ENCODE measurements at regions of chr9 and their contacts with region 1.

Region 1: GRCh38 chr9:4923580-4924544 is 61.2 kb upstream of the JAK2 start:
- DNase-seq: peak; percentile 32 to 36
- ATAC-seq: peak; percentile 56 to 78; a peak in 3 of 6 replicates
- H3K4me3 ChIP-seq: no peak overlapping the region
- H3K27ac ChIP-seq: peak overlapping the region in 1 of 2 experiments; percentile 16; a peak in 1 of 6 replicates
- H3K4me1 ChIP-seq: no peaks in the 10 kb centered on the region
- CTCF ChIP-seq: peak; percentile 63
- EP300 ChIP-seq: no peak
- POLR2A ChIP-seq: no peak
- RAD21 ChIP-seq: peak; percentile 64 to 67

Region 2: GRCh38 chr9:4850603-4851310 is 73.1 kb before region 1 on chr9:
- CTCF ChIA-PET with region 1: interaction called, 15 read pairs
- POLR2A ChIA-PET with region 1: no interaction called
- DNase-seq: no peak
- ATAC-seq: no peak
- H3K4me3 ChIP-seq: no peak overlapping the region
- H3K27ac ChIP-seq: no peak overlapping the region
- H3K4me1 ChIP-seq: no peaks in the 10 kb centered on the region
- CTCF ChIP-seq: no peak
- EP300 ChIP-seq: no peak
- POLR2A ChIP-seq: no peak
- RAD21 ChIP-seq: no peak

Region 3: DNA sequence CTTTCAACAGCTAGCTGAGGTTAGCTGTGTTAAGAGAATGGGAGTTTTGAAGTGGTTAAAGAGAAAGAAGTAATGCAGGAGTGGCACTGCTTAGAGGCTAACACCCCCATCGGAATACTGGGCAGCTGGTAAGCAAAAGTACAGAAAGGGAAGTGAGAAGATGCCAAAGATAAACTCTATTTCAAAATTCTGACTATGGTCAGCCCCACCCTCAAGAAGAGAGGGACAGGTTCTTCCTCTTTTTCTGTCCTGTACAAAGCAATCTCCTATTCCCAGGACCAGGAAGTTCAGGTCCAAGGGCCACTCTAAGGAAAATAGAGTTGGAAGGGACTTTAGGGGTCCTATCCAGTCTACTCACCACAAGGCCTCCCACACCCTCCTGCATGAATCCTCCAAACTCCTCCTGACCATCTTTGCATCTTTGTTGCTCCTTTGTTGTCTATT is 15.3 kb after region 1 on chr9:
- CTCF ChIA-PET with region 1: interaction called, 14 read pairs
- POLR2A ChIA-PET with region 1: no interaction called
- DNase-seq: no peak
- ATAC-seq: no peak
- H3K4me3 ChIP-seq: no peak overlapping the region
- H3K27ac ChIP-seq: no peak overlapping the region
- H3K4me1 ChIP-seq: no peaks in the 10 kb centered on the region
- CTCF ChIP-seq: no peak
- EP300 ChIP-seq: no peak
- POLR2A ChIP-seq: no peak
- RAD21 ChIP-seq: no peak

Region 4: GRCh38 chr9:5178126-5178805 is 254.4 kb after region 1 on chr9:
- CTCF ChIA-PET with region 1: no interaction called
- POLR2A ChIA-PET with region 1: no interaction called
- DNase-seq: no peak
- ATAC-seq: no peak
- H3K4me3 ChIP-seq: no peak overlapping the region
- H3K27ac ChIP-seq: no peak overlapping the region
- H3K4me1 ChIP-seq: no peaks in the 10 kb centered on the region
- CTCF ChIP-seq: no peak
- EP300 ChIP-seq: no peak
- POLR2A ChIP-seq: no peak
- RAD21 ChIP-seq: no peak

Measured in A549 (cell line).